ENCODE measurements at regions of chr5 and their contacts with region 1.

Region 1: DNA sequence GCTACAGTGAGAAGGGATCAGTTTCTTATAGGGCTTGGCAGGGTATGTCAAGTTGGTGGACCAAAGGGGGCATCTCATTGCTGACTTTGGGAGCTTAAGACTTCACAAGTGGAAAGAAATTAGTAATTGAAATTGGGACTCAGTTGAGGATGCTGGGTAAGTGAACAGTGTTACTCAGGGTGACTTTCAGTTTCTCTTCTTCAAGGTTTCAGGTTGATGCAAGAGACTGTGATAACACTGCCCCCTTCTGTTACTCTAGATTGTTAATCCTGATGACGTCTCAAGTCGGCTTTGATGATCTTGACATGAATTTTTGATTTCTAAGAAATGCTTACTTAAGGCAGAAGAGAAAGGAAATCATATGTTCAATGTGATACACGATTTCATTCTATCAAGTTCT is 21.3 kb downstream of the KCTD16 start:
- DNase-seq: peak in 24 of 35 experiments; percentile 11 to 92 (median 30)
- ATAC-seq: peak; percentile 53 to 58 (median 56)
- H3K4me3 ChIP-seq: no peak overlapping the region
- H3K4me3 Mint-ChIP-seq: no peak overlapping the region
- H3K27ac ChIP-seq: peak overlapping the region; percentile 76
- H3K27ac Mint-ChIP-seq: no peak overlapping the region
- H3K4me1 ChIP-seq: peaks cover 40 to 46% of the 10 kb centered on the region in 2 experiments
- H3K4me1 Mint-ChIP-seq: peaks cover 0 to 23% (median 22%) of the 10 kb centered on the region in 3 donors
- H3K27me3 ChIP-seq: no peaks in the 10 kb centered on the region
- H3K27me3 Mint-ChIP-seq: no peaks in the 10 kb centered on the region

Region 2: GRCh38 chr5:143002459-143003328 is 1189.3 kb before region 1 on chr5:
- CTCF ChIA-PET with region 1: interaction called in 1 of 2 experiments, 10 read pairs
- POLR2A ChIA-PET with region 1: interaction called in 1 of 2 experiments, 4 read pairs
- DNase-seq: peak in 34 of 35 experiments; percentile 19 to 89 (median 58)
- ATAC-seq: peak; percentile 88 to 92 (median 90)
- H3K4me3 ChIP-seq: no peak overlapping the region
- H3K4me3 Mint-ChIP-seq: peak overlapping the region; percentile 49 to 63 (median 49)
- H3K27ac ChIP-seq: peak overlapping the region; percentile 97
- H3K27ac Mint-ChIP-seq: peak overlapping the region; percentile 96 to 97
- H3K4me1 ChIP-seq: peaks cover 34 to 63% of the 10 kb centered on the region in 2 experiments
- H3K4me1 Mint-ChIP-seq: peaks cover 44 to 89% (median 81%) of the 10 kb centered on the region in 3 donors
- H3K27me3 ChIP-seq: no peaks in the 10 kb centered on the region
- H3K27me3 Mint-ChIP-seq: no peaks in the 10 kb centered on the region

Region 3: GRCh38 chr5:143824851-143825720 is 366.9 kb before region 1 on chr5:
- CTCF ChIA-PET with region 1: interaction called, 3 to 12 read pairs
- POLR2A ChIA-PET with region 1: no interaction called
- DNase-seq: peak; percentile 55 to 92 (median 76)
- ATAC-seq: peak; percentile 80 to 93 (median 86)
- H3K4me3 ChIP-seq: no peak overlapping the region
- H3K4me3 Mint-ChIP-seq: no peak overlapping the region
- H3K27ac ChIP-seq: no peak overlapping the region
- H3K27ac Mint-ChIP-seq: no peak overlapping the region
- H3K4me1 ChIP-seq: peaks cover 0 to 10% of the 10 kb centered on the region in 2 experiments
- H3K4me1 Mint-ChIP-seq: peaks cover 21 to 22% (median 21%) of the 10 kb centered on the region in 3 donors
- H3K27me3 ChIP-seq: no peaks in the 10 kb centered on the region
- H3K27me3 Mint-ChIP-seq: peaks cover 0 to 1% of the 10 kb centered on the region in 2 donors

Region 4: GRCh38 chr5:144170276-144171024 is 21.5 kb before region 1 on chr5 and contains the starts of genes KCTD16 and YIPF5:
- CTCF ChIA-PET with region 1: interaction called, 8 to 54 read pairs
- POLR2A ChIA-PET with region 1: interaction called, 11 to 38 read pairs
- DNase-seq: peak; percentile 89 to 99 (median 97)
- ATAC-seq: peak; percentile 97 to 99 (median 98)
- H3K4me3 ChIP-seq: peak within 1 kb of the TSS; percentile 86 to 88
- H3K4me3 Mint-ChIP-seq: peak within 1 kb of the TSS; percentile 88 to 96 (median 88)
- H3K27ac ChIP-seq: peak within 1 kb of the TSS; percentile 88
- H3K27ac Mint-ChIP-seq: peak within 1 kb of the TSS; percentile 82 to 97
- H3K4me1 ChIP-seq: peaks cover 4 to 20% of the 10 kb centered on the region in 2 experiments
- H3K4me1 Mint-ChIP-seq: peaks cover 44 to 55% (median 52%) of the 10 kb centered on the region in 3 donors
- H3K27me3 ChIP-seq: no peaks in the 10 kb centered on the region
- H3K27me3 Mint-ChIP-seq: peaks cover 0 to 2% of the 10 kb centered on the region in 2 donors
- total RNA-seq, gene KCTD16: 0.03 to 0.20 (median 0.10) TPM in 4 of 5 donors, not detected in the other
- total RNA-seq, gene YIPF5: 32.8 to 47.1 (median 41.2) TPM

Region 5: GRCh38 chr5:144179226-144179625 is 12.8 kb before region 1 on chr5:
- CTCF ChIA-PET with region 1: interaction called, 11 to 54 read pairs
- POLR2A ChIA-PET with region 1: no interaction called
- DNase-seq: no peak
- ATAC-seq: no peak
- H3K4me3 ChIP-seq: no peak overlapping the region
- H3K4me3 Mint-ChIP-seq: no peak overlapping the region
- H3K27ac ChIP-seq: no peak overlapping the region
- H3K27ac Mint-ChIP-seq: no peak overlapping the region
- H3K4me1 ChIP-seq: peaks cover 2 to 4% of the 10 kb centered on the region in 2 experiments
- H3K4me1 Mint-ChIP-seq: peaks cover 7 to 28% (median 16%) of the 10 kb centered on the region in 3 donors
- H3K27me3 ChIP-seq: no peaks in the 10 kb centered on the region
- H3K27me3 Mint-ChIP-seq: peaks cover 0 to under 1% of the 10 kb centered on the region in 2 donors

Measured in T-cell (primary cell).